Colonic mucosa (tissue), 4 donors: ENCODE measurements at regions of chr21 and their contacts with region 1.

Region 1: DNA sequence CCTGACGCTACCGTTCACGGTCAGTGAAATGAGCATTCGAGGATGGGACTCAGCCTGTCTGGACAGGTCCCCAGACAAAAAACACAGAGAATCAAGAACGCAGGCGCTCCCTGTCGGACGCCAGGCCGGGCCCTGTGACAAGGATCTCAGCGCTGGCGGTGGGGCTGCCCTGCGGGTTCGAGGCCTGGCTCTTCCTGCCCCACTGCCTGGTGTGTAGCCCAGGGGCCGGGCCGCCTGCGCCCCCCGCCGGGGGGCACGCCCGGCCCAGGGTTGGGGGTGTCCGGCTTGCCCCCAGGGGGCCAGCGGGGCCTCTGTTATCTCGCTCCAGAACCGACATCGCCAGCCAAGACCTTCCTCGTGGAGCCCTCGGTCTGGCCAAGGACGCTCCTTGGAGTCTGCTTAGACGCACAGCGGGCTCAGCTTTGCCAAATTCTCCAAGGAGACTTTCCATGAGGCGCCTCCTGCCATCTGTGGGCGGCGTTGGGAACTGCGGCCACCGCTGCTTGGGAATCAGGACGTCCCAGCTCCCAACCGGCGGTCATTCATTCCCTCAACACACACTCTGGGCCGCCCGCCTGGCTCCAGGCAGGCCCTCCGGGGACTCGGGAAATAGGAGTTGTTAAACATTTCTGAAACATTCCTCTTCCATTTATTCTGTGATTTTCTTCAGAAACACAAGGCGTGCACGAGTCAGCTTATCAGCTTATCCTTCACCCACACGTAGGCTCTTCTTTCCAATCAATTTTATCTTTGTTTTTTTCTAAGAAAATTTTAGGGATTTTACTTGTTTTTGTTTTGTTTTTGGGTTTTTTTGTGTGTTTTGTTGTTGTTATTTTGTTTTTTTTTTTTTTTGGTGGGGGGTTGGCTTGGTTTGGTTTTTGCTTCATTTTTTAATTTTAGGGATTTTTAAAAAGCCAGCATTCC is 11.4 kb upstream of the RIPK4 start:
- DNase-seq: peak; percentile 94
- H3K4me3 ChIP-seq: no peak overlapping the region
- H3K27ac ChIP-seq: no peak overlapping the region
- H3K4me1 ChIP-seq: peaks cover 6% of the 10 kb centered on the region
- H3K27me3 ChIP-seq: peaks cover 36% of the 10 kb centered on the region
- CTCF ChIP-seq: peak; percentile 94

Region 2: GRCh38 chr21:41612674-41613532 is 165.3 kb before region 1 on chr21:
- intact Hi-C with region 1: loop called (anchors 2 kb)
- DNase-seq: peak; percentile 65
- H3K4me3 ChIP-seq: no peak overlapping the region
- H3K27ac ChIP-seq: no peak overlapping the region
- H3K4me1 ChIP-seq: peaks cover 12% of the 10 kb centered on the region
- H3K27me3 ChIP-seq: no peaks in the 10 kb centered on the region
- CTCF ChIP-seq: peak; percentile 66